Left ventricle myocardium superior (tissue), 1 donor: ENCODE measurements at regions of chr1 and their contacts with region 1.

Region 1: GRCh38 chr1:182781841-182782586 is 7.6 kb upstream of the NPL start:
- DNase-seq: peak; percentile 82
- ATAC-seq: peak; percentile 86

Region 2: DNA sequence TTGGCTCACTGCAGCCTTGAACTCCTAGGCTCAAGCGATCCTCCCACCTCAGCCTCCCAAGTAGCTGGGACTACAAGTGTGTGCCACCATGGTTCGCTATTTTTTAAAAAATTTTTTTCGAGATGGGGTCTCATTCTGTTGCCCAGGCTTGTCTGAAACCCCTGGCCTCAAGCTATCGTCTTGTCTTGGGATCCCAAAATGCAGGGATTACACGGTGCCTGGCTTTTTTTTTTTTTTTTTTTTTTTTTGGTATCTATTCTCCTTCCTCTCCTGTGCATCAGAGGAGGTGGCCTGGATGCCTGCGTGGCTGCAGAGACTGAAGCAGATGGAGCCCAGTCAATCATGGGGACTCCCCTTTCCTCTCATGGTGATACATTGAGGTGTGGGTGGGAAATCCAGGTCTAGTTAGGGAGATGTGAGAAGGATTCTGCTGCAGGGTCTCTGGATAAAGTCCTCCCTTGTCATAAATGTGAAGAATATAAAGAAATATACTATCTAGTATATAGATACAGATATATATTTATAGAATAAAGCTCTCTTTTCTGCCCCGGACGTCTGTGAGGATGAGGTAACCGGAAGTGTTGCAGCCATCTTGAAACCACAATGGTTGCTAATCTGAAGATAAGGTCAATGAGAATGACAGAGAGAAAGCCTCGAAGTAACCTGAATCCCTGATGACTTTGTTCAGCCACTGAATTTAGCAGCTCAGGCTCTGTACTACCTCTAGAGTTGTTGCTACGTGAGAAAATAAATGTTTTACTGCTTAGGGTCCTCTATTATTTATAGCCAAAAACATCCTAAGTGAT is 351.5 kb before region 1 on chr1:
- intact Hi-C with region 1: no loop called
- DNase-seq: no peak
- ATAC-seq: no peak

Region 3: DNA sequence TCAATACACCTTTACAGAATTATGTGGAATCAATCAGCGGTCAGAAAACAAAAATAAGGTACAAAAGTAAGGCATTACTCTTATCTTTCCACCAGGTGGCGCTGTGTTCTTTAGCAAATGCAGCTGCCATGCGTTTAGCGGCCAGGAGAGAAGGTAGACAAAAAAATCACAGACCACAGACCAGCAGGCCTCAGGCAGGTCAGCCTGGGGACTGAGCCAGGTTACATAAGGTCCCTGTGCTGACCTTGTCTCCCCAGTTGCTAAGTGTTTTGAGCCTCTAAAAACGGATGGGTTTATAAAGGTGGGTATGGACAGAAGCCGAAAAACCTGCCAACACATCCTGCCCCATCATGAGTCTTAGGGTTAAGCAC is 180.6 kb before region 1 on chr1:
- intact Hi-C with region 1: loop called (anchors 2 kb)
- DNase-seq: peak; percentile 58
- ATAC-seq: peak; percentile 64